ENCODE measurements at regions of chr3 and their contacts with region 1.

Region 1: GRCh38 chr3:149026718-149027117 is 35.4 kb downstream of the GYG1 start:
- DNase-seq: no peak
- ATAC-seq: no peak

Region 2: GRCh38 chr3:148943506-148944205 is 83.1 kb before region 1 on chr3:
- intact Hi-C with region 1: no loop called
- DNase-seq: no peak
- ATAC-seq: peak; percentile 86

Region 3: DNA sequence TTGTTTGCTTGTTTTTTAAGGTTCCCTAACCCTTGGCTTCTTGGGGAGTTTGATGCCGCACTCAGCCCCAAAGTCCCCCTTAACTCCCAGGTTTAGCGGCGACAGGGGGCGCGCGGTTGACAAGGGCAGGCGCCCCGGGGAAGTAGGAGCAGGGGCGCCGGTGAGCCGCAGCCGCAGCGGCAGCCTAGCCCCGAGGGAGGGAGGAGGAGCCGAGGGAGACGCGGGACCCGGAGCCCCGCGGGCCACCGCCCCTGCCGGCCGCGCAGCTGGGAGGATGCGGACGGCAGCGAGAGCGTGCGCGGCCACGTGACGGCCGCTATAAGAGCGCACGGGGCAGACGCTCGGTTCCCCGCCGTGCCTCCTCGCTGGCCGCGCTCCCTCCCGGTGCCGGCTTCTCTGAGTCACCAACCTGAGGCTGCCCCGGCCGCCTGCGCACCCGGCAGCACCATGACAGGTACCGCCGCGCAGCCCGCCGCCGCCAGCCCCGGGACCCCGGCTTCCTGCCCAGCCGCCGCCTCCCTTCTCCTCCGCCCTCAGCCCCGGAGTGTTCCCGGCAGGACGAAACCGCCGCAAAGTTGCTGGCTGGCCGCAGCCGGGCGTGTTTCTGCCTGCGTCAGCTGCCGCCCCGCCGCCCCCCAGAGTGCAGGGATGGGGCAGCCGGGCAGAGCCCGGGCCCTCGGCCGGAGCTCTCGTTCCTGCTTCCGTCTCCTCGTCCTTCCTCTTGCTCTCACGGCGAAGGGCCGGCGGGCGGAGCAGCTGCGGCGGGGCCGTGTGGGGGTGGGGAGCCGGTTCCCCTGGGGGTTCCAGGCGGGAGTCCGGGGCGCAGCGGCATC is 35.3 kb before region 1 on chr3 and contains the start of gene GYG1:
- intact Hi-C with region 1: loop called (anchors 5 kb)
- DNase-seq: peak; percentile 91
- ATAC-seq: peak; percentile 97
- total RNA-seq, gene GYG1: 202 TPM

Measured in Right ventricle myocardium inferior (tissue), 1 donor.